Heart left ventricle (tissue), 16 donors: ENCODE measurements at regions of chr13 and their contacts with region 1.

Region 1: DNA sequence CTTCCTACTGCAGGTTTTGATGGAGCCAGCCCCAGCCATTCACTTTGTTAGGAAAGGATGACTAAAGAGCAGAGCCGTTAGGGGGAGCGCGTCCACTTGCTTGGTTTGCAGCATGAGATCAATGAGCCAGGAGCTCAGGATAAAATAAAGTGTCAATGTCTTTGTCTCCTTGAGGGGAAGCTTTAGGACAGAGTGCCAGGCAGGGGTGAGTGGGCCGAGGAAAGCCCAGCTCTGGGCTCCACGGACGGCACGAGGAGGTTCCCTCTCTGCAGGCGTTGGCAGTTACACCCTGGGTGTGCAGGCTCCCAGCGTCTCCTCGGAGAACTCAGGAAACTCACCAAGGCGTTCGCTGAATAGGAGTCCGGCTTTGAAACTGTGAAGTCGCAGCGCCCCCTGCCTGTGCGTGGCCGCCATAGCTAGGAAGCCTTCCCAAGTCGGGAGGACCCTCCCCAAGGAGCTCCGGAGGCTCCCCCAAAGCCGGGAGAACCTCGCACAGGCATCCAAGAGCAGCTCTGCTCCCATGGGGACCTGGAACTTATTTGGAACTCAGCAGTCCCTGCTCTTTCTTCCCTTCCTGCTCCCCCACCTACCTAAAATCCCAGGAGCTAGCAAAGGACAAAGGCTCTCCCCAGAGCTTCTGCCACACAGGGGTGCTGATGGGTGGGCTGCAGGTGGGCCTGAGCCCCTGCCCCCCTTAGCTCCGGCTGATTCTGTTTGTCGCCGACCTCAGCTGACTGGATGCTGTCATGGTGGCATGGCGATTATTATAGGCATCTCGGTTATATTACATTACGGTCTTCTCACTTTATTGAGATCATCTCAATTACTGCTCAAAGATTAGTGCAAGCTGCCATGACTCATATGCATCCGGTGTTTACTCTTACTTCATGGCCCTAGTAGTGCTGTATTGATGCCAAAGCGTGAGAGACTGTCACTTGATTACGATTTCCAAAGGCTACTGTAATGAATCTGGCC is 34.4 kb downstream of the GSX1 start:
- DNase-seq: peak; percentile 68 to 87 (median 73)
- ATAC-seq: peak; percentile 75 to 94 (median 90)
- H3K4me3 ChIP-seq: peak overlapping the region in 7 of 12 donors; percentile 15 to 43 (median 21)
- H3K27ac ChIP-seq: no peak overlapping the region
- H3K4me1 ChIP-seq: peaks cover 0 to 16% (median 4%) of the 10 kb centered on the region in 12 donors
- H3K27me3 ChIP-seq: peaks cover 10 to 87% (median 65%) of the 10 kb centered on the region in 9 donors
- CTCF ChIP-seq: peak; percentile 82 to 97 (median 89)
- POLR2A ChIP-seq: no peak

Region 2: GRCh38 chr13:27374650-27375049 is 452.0 kb before region 1 on chr13:
- intact Hi-C with region 1: loop called in 9 of 10 experiments (anchors 1 to 5 kb)
- DNase-seq: peak in 4 of 5 donors; percentile 47 to 69 (median 58)
- ATAC-seq: peak; percentile 51 to 97 (median 96)
- H3K4me3 ChIP-seq: no peak overlapping the region
- H3K27ac ChIP-seq: no peak overlapping the region
- H3K4me1 ChIP-seq: peaks cover 0 to 5% (median 0%) of the 10 kb centered on the region in 12 donors
- H3K27me3 ChIP-seq: peaks cover 0 to 34% (median 14%) of the 10 kb centered on the region in 9 donors
- CTCF ChIP-seq: peak; percentile 61 to 86 (median 70)
- POLR2A ChIP-seq: no peak

Region 3: GRCh38 chr13:27665333-27665732 is 161.3 kb before region 1 on chr13:
- intact Hi-C with region 1: loop called in 1 of 10 experiments (anchors 5 kb)
- DNase-seq: no peak
- ATAC-seq: no peak
- H3K4me3 ChIP-seq: no peak overlapping the region
- H3K27ac ChIP-seq: no peak overlapping the region
- H3K4me1 ChIP-seq: peaks cover 0 to 31% (median 6%) of the 10 kb centered on the region in 12 donors
- H3K27me3 ChIP-seq: no peaks in the 10 kb centered on the region
- CTCF ChIP-seq: peak in 10 of 12 donors; percentile 9 to 45 (median 23)
- POLR2A ChIP-seq: no peak

Region 4: DNA sequence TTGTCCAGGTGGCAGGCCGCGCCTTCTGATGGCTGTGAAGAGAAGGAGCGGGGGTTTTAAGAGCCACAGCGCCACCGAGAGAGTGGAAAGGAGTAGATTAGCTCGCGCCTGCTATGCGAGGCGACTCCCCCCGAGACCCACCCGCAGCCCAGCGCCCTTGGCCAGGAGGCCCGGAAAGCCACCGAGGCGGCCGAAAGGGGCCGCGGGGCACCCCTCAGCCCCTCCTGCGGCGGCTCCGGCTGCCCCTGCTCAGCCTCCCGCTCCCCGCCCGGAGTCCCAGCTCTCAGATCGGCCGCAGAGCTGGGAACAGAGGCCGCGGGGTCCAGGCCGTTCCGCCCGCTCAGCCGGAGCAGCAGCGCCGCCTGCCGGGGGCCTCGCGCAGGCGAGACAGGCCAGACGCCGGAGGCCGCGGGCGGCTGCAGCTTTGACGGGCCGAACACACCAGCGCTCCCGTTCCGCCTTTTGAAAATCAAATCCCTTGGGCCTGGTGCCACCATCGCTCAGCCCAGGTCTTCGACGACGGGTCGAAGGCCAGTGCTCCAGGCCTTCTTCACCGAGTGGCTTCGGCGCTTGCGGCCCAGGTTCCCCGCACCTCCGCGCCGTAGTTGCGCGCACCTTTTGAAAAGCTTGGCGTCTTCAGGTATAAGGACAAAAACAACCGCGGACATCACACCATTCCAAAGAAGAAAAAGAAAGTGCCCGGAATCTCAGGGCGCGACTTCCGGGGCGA is 127.2 kb after region 1 on chr13:
- intact Hi-C with region 1: loop called in 4 of 10 experiments (anchors 10 kb)
- DNase-seq: peak; percentile 59 to 84 (median 64)
- ATAC-seq: peak in 3 of 4 donors; percentile 88 to 98 (median 97)
- H3K4me3 ChIP-seq: peak overlapping the region; percentile 13 to 58 (median 39)
- H3K27ac ChIP-seq: no peak overlapping the region
- H3K4me1 ChIP-seq: peaks cover 0 to 19% (median 13%) of the 10 kb centered on the region in 12 donors
- H3K27me3 ChIP-seq: peaks cover 38 to 97% (median 70%) of the 10 kb centered on the region in 9 donors
- CTCF ChIP-seq: peak; percentile 60 to 87 (median 76)
- POLR2A ChIP-seq: no peak

Region 5: DNA sequence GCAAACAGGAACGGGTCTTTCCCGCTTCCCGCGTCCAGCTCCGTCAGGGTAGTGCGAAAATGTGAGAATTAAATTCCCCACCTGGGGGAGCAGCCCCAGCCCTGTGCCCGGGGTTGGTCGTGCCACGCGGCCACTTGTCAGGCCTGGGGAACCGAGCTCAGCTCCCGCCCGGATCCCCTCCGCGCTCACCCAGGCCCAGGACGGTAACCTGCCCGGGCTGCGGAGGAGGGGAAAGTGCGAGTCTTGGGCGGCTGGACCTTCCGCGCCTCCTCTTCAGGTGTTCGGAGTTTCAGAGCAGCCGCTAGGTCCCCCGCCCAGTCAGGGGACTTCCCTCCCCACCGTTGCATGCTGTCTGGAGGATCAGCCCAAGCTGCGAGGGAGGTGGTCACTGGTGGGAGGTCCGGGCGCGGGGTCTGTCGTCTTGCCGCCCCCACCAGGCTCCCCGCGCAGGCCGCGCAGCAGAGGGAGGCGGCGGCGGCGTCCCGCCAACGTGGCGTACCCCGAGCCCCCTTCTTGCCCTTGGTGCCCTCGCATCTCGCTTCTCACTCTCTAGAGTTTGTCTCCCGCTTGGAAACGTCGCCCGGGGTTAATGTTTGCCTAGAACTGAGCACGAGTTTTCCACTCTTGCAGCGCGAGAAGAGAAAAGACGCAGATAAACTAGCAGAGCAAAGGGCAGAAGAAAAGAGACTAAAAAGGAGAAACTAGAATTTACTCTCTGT is 153.8 kb after region 1 on chr13:
- intact Hi-C with region 1: loop called in 9 of 10 experiments (anchors 1 to 5 kb)
- DNase-seq: no peak
- ATAC-seq: no peak
- H3K4me3 ChIP-seq: no peak overlapping the region
- H3K27ac ChIP-seq: no peak overlapping the region
- H3K4me1 ChIP-seq: peaks cover 0 to 37% (median 11%) of the 10 kb centered on the region in 12 donors
- H3K27me3 ChIP-seq: peaks cover 67 to 99% (median 89%) of the 10 kb centered on the region in 9 donors
- CTCF ChIP-seq: no peak
- POLR2A ChIP-seq: no peak

Region 6: GRCh38 chr13:27985600-27985999 is 158.9 kb after region 1 on chr13:
- intact Hi-C with region 1: loop called in 9 of 10 experiments (anchors 1 to 5 kb)
- DNase-seq: no peak
- ATAC-seq: no peak
- H3K4me3 ChIP-seq: no peak overlapping the region
- H3K27ac ChIP-seq: no peak overlapping the region
- H3K4me1 ChIP-seq: peaks cover 0 to 2% (median 0%) of the 10 kb centered on the region in 12 donors
- H3K27me3 ChIP-seq: peaks cover 16 to 88% (median 52%) of the 10 kb centered on the region in 9 donors
- CTCF ChIP-seq: no peak
- POLR2A ChIP-seq: no peak

Region 7: DNA sequence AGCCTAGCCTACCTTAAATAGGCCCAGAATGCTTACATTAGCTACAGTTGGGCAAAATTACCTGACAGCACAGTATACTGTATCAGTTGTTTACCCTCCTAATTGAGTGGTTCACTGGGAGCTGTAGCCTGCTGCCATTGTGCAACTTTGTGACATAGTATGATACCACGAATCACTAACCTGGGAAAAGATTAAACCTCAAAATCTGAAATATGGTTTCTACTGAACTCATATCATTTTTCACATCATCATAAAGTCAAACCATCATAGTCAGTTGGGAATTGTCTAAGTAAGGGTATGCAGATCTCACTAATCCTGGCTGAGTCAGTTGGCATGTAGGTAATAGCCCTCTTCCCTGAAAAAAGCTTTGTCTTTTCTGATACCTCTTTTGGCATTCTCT is 320.8 kb after region 1 on chr13:
- intact Hi-C with region 1: no loop called
- DNase-seq: no peak
- ATAC-seq: no peak
- H3K4me3 ChIP-seq: no peak overlapping the region
- H3K27ac ChIP-seq: no peak overlapping the region
- H3K4me1 ChIP-seq: peaks cover 0 to 31% (median 8%) of the 10 kb centered on the region in 12 donors
- H3K27me3 ChIP-seq: no peaks in the 10 kb centered on the region
- CTCF ChIP-seq: no peak
- POLR2A ChIP-seq: no peak

Region 8: GRCh38 chr13:28199089-28199488 is 372.4 kb after region 1 on chr13:
- intact Hi-C with region 1: no loop called
- DNase-seq: no peak
- ATAC-seq: no peak
- H3K4me3 ChIP-seq: no peak overlapping the region
- H3K27ac ChIP-seq: no peak overlapping the region
- H3K4me1 ChIP-seq: no peaks in the 10 kb centered on the region
- H3K27me3 ChIP-seq: no peaks in the 10 kb centered on the region
- CTCF ChIP-seq: peak in 1 of 12 donors; percentile 20
- POLR2A ChIP-seq: no peak